ENCODE measurements at regions of chr7 and their contacts with region 1.

Region 1: DNA sequence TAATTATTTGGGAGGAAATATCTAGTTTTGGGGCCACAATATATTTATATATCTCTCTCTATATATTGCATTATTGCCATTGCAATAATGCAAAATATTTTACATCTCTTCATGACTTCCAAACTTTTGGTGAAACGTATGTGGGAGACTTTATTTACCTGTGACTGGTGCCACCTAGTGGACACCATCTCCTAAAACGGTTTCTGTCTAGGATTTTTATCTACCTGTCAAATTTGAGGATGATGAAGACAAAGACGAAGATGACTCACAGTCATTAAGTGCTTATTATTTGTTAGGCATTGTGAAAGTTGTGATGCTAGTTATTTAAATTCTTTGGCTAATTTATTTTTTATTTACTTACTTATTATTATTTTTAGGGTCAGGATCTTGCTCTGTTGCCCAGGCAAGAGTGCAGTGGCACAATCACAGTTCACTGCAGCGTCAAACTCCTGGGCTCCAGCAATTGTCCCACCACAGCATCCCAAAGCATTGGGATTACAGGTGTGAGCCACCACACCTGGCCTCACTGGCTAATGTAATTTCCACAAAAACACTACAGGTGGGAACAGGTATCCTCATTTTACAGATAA is 18.7 kb upstream of the CBLL1 start:
- DNase-seq: peak in 1 of 3 donors; percentile 84
- ATAC-seq: peak; percentile 48
- H3K4me3 ChIP-seq: no peak overlapping the region
- H3K4me1 ChIP-seq: no peaks in the 10 kb centered on the region
- CTCF ChIP-seq: peak; percentile 30

Region 2: DNA sequence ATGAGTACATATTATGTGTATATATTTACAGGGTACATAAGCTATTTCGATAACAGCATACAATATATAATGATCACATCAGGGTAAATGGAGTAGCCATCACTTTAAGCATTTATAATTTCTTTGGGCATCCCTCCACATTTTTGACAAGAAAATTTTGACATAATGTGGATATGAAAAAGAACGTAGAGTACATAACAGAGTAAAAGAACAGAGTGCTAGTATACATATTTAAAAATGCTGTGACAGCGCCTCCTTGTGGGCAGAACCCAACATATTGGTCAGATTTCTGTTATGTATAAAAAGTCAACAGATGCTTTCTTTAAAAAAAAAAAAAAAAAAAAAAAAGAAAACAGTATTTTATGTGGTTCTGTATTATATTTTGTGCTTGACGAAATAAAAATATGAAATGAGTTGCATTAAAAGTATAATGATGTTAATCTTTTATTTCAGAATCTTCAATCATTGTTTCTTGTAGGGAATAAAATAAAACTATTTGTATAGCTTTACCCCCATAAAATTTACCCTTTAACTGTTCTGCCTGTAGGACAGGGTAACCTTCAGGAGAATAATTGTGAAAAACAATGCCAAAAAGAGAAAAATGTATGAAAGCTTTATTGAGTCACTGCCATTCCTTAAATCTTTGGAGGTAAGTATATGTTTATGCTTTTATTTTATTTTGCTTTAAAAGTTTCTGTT is 574.7 kb before region 1 on chr7:
- intact Hi-C with region 1: no loop called
- DNase-seq: peak in 2 of 3 donors; percentile 51 to 96
- ATAC-seq: peak; percentile 75
- H3K4me3 ChIP-seq: no peak overlapping the region
- H3K4me1 ChIP-seq: no peaks in the 10 kb centered on the region
- CTCF ChIP-seq: peak; percentile 24

Region 3: DNA sequence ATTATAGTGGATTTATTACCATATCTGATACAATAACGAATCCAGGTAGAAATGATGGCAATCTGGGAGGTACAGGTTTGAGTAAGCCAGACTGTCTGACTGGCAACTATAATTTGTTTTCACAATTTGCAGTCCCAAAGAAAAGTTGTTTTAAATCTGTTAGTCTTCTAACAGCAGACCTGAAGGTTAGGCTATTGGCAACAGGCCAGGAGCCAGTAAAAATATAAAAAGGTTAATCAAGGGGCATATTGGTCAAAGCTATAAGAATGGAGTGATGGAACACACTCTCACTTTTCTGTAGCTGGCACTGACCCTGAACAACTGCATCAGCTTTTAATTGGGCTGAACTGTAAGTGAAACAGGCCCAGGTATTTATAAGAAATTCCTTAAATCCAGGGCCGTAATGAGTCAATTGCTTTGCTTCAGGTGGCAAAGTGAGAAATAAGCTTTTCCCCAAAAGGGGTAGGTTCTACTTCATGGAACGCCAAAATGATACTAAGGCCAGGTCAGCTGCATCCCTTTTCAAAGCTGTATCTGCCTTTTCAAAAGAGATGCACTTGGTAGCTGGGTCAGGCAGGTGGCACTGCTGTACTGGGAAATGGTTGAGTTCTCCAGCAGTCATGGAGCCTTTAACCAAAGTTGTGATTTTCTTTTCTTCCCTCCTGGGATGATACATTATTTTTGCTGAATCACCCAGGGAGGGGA is 262.4 kb before region 1 on chr7:
- intact Hi-C with region 1: loop called in 1 of 2 experiments (anchors 2 kb)
- DNase-seq: peak in 2 of 3 donors; percentile 52 to 53
- ATAC-seq: peak; percentile 88
- H3K4me3 ChIP-seq: no peak overlapping the region
- H3K4me1 ChIP-seq: no peaks in the 10 kb centered on the region
- CTCF ChIP-seq: peak; percentile 41

Region 4: GRCh38 chr7:107471292-107472070 is 253.8 kb before region 1 on chr7:
- intact Hi-C with region 1: loop called in 1 of 2 experiments (anchors 10 kb)
- DNase-seq: no peak
- ATAC-seq: no peak
- H3K4me3 ChIP-seq: no peak overlapping the region
- H3K4me1 ChIP-seq: no peaks in the 10 kb centered on the region
- CTCF ChIP-seq: no peak

Region 5: GRCh38 chr7:107609811-107610261 is 115.4 kb before region 1 on chr7:
- intact Hi-C with region 1: no loop called
- DNase-seq: no peak
- ATAC-seq: no peak
- H3K4me3 ChIP-seq: no peak overlapping the region
- H3K4me1 ChIP-seq: peaks cover 3% of the 10 kb centered on the region
- CTCF ChIP-seq: no peak

Measured in mucosa of descending colon (tissue), 3 donors.